ENCODE measurements at regions of chr22 and their contacts with region 1.

Region 1: DNA sequence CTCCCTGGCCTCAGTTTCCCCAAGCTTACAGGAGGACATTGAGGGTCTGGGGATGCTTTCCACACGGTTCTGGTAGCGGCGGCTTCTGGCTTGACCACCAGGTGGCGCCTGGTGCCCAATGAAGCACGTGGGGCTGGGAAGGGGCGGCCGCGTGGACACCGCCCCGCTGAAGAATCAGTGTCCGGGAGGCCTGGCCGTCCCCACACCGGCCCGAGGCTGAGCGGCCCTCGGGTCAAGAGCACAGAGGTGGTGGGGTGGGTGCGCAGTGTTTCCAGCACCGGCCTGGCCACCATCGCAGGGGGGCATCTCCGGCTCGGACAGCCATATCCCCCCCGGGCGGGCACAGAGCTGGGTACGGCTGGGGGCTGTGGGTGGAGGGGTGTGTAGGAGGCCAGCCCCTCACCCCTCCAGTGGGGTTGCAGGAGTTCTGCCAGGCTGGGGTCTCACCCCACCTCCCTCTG is 27.8 kb upstream of the PPARA start:
- DNase-seq: peak in 40 of 42 donors; percentile 63 to 92 (median 80)

Region 2: GRCh38 chr22:46171940-46172339 is 49.4 kb after region 1 on chr22:
- intact Hi-C with region 1: no loop called
- DNase-seq: no peak

Region 3: DNA sequence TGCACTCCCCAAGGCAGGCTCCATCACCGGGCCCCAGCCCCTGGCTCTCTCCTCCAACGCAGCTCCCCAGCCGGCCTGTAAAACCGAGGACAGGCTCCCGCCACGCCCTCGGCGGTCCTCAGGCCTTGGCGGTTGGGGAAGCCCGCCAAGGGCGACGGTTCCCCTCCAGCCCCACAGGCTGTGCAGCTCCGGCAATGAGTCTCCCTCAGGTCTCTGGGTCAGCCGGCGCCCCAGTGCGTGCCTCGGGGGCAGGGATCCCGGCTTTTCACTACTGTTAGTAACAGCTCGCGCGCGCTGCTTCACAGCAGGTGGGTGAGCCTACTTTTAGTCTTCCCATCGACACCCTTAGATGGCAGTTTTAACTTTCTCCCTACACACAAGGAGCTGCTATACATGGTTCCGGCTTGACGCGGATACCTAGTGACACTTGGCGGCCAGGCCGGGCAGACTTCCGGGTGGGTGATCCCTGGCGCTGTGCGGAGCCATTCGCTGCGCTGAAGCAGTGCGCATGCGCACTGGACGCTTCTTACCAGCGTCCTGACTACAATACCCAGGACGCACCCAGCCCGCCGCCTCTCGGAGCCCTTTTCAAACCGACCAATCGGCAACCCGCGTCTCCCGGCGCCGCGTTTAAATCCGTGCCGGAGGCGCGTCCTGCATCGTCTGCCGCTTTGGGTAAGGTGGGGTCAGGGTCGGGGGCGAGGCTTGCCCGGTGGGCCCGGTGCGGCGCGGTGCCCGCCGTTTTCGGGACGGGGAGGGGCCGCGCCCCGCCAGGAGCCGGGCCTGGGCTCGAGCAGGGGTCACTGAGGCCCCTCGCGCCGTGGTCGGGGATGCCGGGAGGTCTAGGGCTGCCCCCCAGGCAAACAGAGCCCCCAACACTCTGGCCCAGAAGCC is 174.0 kb after region 1 on chr22 and contains the start of gene GTSE1:
- intact Hi-C with region 1: loop called (anchors 5 kb)
- DNase-seq: peak; percentile 96 to 99 (median 98)

Region 4: DNA sequence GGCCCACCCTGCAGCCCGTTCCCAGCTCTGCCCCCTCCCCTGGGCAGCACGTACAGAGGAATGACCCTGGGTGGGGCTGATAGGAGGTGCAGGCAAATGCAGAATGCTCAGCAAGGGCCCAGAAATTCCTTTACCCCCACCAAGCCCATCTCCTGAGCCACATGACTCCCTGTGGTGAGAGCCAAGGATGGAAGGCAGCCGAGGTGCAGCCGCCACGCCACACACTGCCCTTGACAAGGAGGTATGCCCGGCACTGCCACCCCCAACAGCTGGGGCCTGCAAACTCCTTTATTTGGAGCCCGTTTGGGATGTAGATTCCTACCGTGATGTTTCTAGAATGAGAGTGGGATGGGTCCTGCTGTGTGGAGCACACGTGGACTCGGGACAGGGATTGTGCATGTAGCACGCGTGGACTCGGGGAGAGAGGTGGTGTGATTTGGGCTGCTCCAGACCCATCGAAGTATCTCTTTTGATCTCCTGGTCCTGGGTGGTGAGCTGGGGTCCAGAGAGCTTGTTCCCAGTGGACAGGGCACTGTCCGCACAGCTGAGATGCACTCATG is 187.1 kb after region 1 on chr22:
- intact Hi-C with region 1: loop called (anchors 5 kb)
- DNase-seq: no peak

Region 5: DNA sequence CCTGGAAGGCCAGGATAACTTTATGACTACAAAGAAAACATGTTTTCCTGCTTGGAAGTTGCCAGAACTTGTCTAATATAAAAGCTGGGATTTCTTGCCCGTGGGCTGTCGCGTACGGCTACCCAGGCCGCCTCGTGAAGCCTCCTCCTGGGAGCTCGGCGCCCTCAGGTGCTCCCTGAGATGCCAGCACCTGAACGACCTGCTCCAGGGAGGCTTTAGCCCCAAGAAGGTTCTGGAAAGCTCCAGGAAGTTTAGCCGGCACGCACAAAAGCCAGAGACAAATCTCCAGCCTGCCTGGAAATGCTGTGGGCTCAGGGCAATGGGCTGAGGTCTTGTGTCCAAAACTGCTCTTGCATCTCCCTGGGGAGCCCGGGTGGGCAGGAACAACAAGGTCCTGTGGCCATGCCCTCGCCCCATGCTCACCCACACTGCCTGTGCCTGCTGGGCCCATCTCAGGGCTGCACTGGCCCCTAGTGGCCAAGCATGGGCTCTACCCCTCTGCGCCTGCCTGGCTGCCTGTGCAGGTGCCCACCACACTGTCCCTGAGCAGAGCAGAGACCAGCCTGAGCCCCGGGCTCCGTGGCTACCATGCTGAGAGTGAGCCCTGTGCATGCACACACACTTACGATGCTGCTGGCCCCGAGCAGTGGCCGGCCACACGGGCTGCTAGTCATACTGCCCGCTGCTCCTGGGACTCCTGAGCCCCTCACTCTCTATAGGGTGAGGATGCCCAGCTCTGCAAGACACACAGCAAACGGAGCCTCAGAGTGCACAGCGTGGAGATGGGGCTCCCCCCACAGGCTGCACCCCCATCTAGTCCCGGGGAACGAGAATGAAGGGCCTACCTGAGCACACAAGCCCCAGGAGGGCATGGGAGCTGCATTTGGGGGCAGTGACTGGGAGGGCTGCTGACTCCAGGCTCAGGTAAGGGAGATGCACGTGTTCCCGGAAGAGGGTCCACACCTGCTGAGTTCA is 419.8 kb after region 1 on chr22:
- intact Hi-C with region 1: loop called (anchors 10 kb)
- DNase-seq: peak; percentile 56 to 88 (median 74)

Measured in head of caudate nucleus (tissue), 42 donors.